CD8-positive, alpha-beta memory T cell (primary cell): ENCODE measurements at regions of chr6 and their contacts with region 1.

Region 1: DNA sequence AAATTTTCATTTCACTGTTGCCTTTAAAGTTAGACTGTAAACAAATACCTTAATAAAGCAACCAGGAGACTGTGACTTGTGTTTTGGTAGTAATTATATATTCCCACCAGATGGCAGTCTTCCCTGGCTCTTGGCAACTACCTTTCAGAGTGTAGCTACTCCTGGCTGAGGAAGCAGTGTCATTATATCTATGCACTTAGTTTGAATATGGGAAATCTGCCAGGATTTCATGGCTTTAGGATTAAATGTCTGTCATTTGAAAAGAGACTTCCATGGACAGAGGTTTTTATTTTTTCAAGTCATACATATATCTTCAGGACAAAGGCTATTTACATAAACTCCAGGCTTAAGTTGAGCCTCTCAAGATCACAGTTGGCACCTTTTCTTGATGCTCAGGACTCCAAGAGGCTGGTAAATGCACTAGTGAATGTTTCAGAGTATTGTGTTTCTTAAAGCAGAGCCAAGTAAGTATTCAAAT is 160.1 kb downstream of the C6orf58 start:
- DNase-seq: peak in 4 of 5 donors; percentile 14 to 62 (median 55)
- H3K4me3 ChIP-seq: no peak overlapping the region
- H3K4me3 Mint-ChIP-seq: peak overlapping the region in 1 of 7 donors; percentile 30
- H3K27ac ChIP-seq: no peak overlapping the region
- H3K27ac Mint-ChIP-seq: peak overlapping the region in 6 of 8 donors; percentile 50 to 77 (median 58)
- H3K4me1 ChIP-seq: peaks cover 15% of the 10 kb centered on the region
- H3K4me1 Mint-ChIP-seq: peaks cover 46 to 80% (median 73%) of the 10 kb centered on the region in 3 donors
- H3K27me3 ChIP-seq: no peaks in the 10 kb centered on the region
- H3K27me3 Mint-ChIP-seq: no peaks in the 10 kb centered on the region

Region 2: DNA sequence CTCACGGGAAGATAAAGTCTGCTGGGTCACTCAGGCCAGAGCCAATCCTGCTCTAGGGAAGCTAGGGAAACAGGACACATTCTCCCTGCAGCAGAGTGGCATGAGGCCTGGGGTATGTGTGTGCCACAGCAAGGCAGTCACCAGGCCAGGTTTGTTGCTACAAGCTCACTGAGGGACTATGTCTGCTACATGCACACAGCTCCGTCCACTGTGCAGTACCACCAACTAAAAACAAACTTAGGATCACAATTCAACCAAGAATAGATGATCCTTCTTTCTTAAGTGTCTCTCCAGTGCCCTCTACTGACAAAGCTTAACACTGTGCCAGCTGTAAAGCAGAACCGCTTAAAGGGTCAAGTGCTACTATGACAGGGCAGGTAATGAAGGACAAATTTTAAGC is 590.8 kb after region 1 on chr6:
- CTCF ChIA-PET with region 1: interaction called, 27 read pairs
- POLR2A ChIA-PET with region 1: no interaction called
- DNase-seq: peak in 3 of 5 donors; percentile 21 to 55 (median 29)
- H3K4me3 ChIP-seq: no peak overlapping the region
- H3K4me3 Mint-ChIP-seq: no peak overlapping the region
- H3K27ac ChIP-seq: no peak overlapping the region
- H3K27ac Mint-ChIP-seq: no peak overlapping the region
- H3K4me1 ChIP-seq: no peaks in the 10 kb centered on the region
- H3K4me1 Mint-ChIP-seq: no peaks in the 10 kb centered on the region
- H3K27me3 ChIP-seq: no peaks in the 10 kb centered on the region
- H3K27me3 Mint-ChIP-seq: peaks cover 0 to 4% of the 10 kb centered on the region in 2 donors